BJ (cell line): ENCODE measurements at regions of chr18 and their contacts with region 1.

Region 1: DNA sequence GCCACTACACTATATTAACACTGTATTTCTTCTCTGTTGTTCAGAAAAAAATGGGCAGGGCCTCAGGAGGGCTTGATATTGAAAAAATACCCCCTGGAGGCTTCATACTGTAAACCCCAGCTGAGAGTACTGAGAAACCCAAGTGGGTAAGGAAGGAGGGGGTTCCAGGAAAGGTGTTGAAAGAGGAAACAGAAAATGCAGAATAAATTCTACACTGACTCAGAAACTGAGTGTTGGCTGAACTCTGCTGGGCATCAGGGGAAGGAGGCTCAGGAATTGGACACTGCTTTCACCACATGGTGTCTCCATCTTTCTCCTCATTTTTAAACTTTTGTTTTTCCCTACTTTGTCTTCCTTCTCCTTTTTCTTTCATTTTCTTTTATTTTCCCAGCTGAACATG is 253.7 kb downstream of the DYM start:
- DNase-seq: no peak
- H3K4me3 ChIP-seq: no peak overlapping the region
- H3K27me3 ChIP-seq: no peaks in the 10 kb centered on the region
- CTCF ChIP-seq: peak; percentile 32; the same call in 1 of the 2 replicates

Region 2: GRCh38 chr18:49178736-49179135 is 28.0 kb before region 1 on chr18:
- CTCF ChIA-PET with region 1: no interaction called
- POLR2A ChIA-PET with region 1: interaction called, 29 read pairs
- DNase-seq: no peak
- H3K4me3 ChIP-seq: no peak overlapping the region
- H3K27me3 ChIP-seq: no peaks in the 10 kb centered on the region
- CTCF ChIP-seq: peak; percentile 60